ENCODE measurements at regions of chr6 and their contacts with region 1.

Region 1: DNA sequence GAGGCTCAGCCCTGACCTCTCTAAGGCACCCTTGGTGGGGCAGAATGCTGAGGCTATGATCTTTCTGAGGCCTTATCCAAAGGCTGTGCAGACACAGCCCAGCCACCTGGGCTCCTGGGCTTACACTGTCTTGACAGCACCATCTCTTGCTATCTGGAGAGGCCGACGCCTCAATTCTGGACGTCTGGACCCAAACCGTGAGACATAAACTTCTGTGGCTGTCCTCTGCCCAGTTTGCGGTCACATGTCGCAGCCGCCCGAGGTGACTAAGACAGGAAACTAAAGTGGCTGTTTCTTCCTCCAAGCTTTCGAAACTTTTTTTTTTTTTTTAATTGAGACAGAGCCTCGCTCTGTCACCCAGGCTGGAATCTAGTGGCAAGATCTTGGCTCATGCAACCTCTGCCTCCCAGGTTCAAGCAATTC is 49.3 kb downstream of the PRR18 start:
- DNase-seq: peak; percentile 57
- H3K4me3 Mint-ChIP-seq: peak overlapping the region; percentile 37
- H3K27ac Mint-ChIP-seq: peak overlapping the region; percentile 29
- H3K4me1 Mint-ChIP-seq: peaks cover 28% of the 10 kb centered on the region
- H3K27me3 Mint-ChIP-seq: peaks cover 15% of the 10 kb centered on the region

Region 2: GRCh38 chr6:166162599-166163342 is 96.1 kb before region 1 on chr6:
- CTCF ChIA-PET with region 1: no interaction called
- intact Hi-C with region 1: loop called (anchors 2 kb)
- DNase-seq: peak; percentile 61
- H3K4me3 Mint-ChIP-seq: no peak overlapping the region
- H3K27ac Mint-ChIP-seq: no peak overlapping the region
- H3K4me1 Mint-ChIP-seq: peaks cover 3% of the 10 kb centered on the region
- H3K27me3 Mint-ChIP-seq: peaks cover 48% of the 10 kb centered on the region

Region 3: GRCh38 chr6:166244353-166245045 is 14.4 kb before region 1 on chr6:
- CTCF ChIA-PET with region 1: interaction called, 4 read pairs
- intact Hi-C with region 1: loop called (anchors 1 kb)
- DNase-seq: peak; percentile 78
- H3K4me3 Mint-ChIP-seq: peak overlapping the region; percentile 49
- H3K27ac Mint-ChIP-seq: no peak overlapping the region
- H3K4me1 Mint-ChIP-seq: peaks cover 18% of the 10 kb centered on the region
- H3K27me3 Mint-ChIP-seq: no peaks in the 10 kb centered on the region

Region 4: DNA sequence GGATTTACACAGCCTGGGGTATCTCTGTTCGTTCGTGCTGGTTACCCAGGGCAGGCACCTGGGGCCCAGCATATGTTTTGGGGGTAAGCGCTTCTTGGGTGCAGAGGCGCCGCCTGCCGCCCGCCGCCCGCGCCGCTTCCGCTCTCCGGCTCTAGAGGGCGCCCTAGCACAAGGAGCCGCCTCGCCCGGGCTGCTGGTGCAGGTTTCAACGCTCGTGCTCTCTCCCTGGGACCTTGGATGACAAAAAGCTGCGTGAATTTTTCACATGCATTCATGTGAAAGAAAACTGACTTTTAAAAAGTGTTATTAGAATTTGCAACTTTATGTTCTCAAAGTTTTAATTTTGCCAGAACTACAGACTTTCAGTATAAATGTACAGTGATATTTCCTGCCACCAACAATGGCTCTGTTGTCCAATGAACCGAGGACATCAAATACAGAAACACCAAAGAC is 16.9 kb after region 1 on chr6:
- CTCF ChIA-PET with region 1: interaction called, 3 read pairs
- intact Hi-C with region 1: loop called (anchors 1 kb)
- DNase-seq: peak; percentile 78
- H3K4me3 Mint-ChIP-seq: no peak overlapping the region
- H3K27ac Mint-ChIP-seq: no peak overlapping the region
- H3K4me1 Mint-ChIP-seq: peaks cover 3% of the 10 kb centered on the region
- H3K27me3 Mint-ChIP-seq: no peaks in the 10 kb centered on the region

Region 5: DNA sequence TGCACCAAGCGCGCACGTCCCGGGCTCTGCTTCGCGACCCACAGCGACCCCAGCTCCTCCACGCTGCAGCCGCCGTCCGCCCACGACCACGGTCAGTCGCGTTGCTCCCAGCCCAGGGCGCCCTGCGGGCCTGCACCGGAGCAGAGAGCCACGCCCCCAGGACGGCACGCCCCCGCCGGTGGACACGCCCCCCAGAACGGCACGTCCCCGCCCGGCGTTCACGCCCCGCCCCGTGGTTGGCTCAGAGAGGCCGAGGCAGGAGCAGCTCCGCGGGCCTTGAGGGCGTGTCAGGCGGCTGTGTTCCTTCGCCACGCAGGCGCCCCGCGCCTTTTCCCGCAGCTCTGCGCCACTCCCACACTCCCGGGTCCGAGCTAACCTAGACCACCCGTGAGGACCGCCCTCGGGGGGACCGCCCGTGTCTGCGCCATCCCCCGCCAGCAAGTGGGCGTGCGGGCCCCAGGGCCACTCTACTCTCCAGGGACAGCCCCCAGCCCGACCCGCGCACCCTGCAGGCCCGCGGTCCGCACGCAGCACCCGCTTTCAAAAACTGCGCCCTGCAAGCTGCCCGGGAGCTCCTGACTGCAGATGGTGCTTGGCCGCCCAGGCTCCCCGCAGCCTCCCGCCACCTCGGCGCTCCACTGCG is 697.7 kb after region 1 on chr6 and contains the start of gene RNASET2:
- CTCF ChIA-PET with region 1: no interaction called
- intact Hi-C with region 1: loop called (anchors 10 kb)
- DNase-seq: peak; percentile 99
- H3K4me3 Mint-ChIP-seq: peak within 1 kb of the TSS; percentile 86
- H3K27ac Mint-ChIP-seq: peak within 1 kb of the TSS; percentile 95
- H3K4me1 Mint-ChIP-seq: peaks cover 71% of the 10 kb centered on the region
- H3K27me3 Mint-ChIP-seq: no peaks in the 10 kb centered on the region
- total RNA-seq, gene RNASET2: 74.1 to 75.6 TPM

Measured in activated naive CD4-positive, alpha-beta T cell treated with anti-CD3 and anti-CD28 coated beads for 36 hours (primary cell).